ENCODE measurements at regions of chr2 and their contacts with region 1.

Region 1: DNA sequence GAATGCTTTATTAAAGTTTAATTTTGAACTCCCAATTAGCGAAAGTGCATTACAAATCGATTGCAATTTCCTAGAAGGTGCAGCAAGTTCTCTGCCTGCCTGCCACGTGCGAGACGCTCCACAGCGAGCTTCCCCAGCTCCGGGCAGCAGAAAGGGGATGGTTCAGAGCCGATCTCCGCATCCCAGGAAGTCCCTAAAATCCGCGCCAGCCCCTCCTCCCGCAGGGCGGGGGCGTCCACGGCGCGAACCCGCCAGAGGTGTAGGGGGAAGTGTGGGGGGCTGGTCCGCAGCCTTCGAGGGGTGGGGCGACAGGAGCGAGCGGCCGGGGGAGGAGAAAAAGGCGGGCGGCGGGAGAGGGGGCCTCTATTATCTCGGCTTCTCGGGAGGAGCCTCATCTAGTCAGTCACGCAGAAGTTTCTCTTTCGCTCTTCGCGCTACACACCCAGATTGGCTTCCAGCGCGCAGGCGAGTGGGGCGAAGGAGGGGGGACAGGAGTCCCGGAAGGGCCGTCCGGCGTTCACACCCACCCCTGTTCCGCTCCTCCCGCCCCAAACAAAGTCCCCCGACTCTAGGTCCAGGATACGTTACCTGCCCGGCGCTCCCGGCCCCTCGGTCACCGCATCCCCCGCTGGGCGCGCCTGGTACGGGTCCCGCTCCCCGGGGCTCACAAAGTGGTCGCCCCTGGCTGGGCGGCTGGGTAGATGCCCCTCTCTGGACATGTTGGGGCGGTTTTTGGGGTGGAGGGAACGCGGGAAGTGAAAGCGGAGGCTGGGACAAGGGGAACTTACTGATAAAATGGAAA is 9.1 kb upstream of the NR4A2 start:
- DNase-seq: peak; percentile 95
- ATAC-seq: peak; percentile 93
- H3K4me3 ChIP-seq: peak overlapping the region; percentile 86
- H3K27ac ChIP-seq: peak overlapping the region; percentile 100
- H3K4me1 ChIP-seq: peaks cover 25% of the 10 kb centered on the region
- H3K27me3 ChIP-seq: no peaks in the 10 kb centered on the region
- CTCF ChIP-seq: no peak

Region 2: DNA sequence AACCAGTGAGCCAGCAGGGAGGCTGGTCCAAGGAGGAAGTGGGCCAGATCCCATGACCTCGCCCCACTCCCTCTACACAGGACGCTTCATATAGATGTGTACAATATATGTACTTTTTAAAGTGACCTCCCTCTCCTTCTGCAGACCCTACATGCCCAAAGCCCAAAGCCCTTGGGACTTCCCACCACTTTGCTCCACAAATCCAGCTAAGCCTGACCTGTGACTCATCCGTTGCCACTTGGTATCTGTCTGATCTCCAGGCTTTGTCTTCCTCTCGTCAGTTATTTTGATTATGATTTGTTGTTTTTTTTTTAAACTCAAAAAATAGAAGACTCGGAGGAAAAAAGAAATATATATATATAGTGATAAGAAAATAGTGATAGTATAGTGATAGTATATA is 1172.3 kb before region 1 on chr2:
- intact Hi-C with region 1: no loop called
- DNase-seq: no peak
- ATAC-seq: no peak
- H3K4me3 ChIP-seq: no peak overlapping the region
- H3K27ac ChIP-seq: no peak overlapping the region
- H3K4me1 ChIP-seq: no peaks in the 10 kb centered on the region
- H3K27me3 ChIP-seq: no peaks in the 10 kb centered on the region
- CTCF ChIP-seq: no peak

Region 3: DNA sequence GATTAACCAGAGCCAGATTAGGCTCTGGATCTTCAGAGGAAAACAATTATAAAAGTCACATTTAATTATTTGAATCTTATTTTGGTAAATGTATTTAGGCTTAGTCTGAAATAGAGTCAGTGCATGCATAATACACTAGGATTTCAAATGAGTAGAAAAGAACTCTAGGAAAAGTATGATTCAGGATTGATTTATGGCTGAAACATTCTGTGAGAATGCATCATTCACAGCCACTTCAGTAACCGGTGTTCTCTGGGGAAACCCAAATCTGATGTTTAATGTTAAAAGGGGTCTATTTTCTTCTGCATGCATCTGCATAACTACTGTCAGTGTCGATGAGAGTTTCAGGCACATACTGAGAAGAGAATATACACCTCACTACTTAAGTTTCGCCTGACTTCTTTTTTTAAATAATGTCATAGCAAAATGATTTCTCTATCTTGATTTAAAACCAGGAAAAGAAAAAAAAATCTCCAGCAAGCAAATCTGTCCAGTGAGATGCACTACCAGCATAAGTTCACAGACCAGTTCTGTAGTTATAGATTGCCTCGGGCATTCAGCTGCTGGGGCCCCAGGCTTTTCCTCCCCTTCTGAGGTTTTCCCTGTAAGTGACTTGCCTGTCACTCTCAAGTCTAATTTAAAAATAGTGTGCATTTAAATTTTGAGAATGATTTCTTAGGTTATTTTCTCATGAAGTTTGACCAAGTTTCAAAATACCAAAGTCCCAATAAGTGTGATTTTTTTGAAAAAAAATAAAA is 510.7 kb before region 1 on chr2:
- intact Hi-C with region 1: no loop called
- DNase-seq: no peak
- ATAC-seq: no peak
- H3K4me3 ChIP-seq: no peak overlapping the region
- H3K27ac ChIP-seq: no peak overlapping the region
- H3K4me1 ChIP-seq: no peaks in the 10 kb centered on the region
- H3K27me3 ChIP-seq: no peaks in the 10 kb centered on the region
- CTCF ChIP-seq: no peak

Region 4: DNA sequence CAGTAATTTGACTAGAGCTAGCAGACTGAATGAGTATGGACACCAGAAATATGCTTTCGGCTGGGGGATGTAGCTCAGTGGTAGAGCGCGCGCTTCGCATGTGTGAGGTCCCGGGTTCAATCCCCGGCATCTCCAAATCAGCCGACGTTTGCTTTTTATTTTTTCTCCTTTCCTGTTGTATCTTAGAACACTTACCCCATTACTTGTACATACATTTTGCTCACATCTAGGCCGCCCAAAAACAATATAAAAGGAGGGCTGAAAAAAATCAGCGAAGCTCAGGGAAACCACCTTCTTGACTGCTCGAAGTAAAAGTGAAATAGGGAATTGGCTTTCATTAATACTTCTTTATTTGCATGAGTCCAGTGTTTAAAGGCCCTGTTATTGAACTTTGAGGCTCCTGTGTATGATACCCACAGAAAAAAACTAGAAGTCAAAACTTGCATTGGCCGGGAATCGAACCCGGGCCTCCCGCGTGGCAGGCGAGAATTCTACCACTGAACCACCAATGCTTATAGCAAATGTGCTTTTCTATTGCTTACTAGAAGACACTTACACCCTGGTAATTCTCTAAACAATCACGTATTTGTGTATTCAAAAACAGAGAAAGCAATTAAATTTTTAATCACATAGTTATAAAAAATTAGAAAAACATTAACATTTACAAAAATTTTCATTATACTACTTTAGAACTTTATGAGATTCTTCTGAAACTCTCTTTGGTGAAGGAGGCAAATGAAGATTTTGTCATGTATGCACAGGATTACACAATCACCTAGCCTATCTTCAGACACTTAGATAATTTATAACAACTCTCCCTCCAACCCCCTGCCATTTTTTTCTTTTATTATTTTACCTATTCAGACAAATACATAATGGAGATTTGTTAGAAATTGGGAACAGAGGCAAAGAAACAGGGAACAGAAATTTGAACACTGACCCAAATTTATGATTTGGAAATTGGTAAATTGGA is 59.3 kb after region 1 on chr2:
- intact Hi-C with region 1: loop called (anchors 10 kb)
- DNase-seq: peak; percentile 78
- ATAC-seq: peak; percentile 73
- H3K4me3 ChIP-seq: peak overlapping the region; percentile 71
- H3K27ac ChIP-seq: peak overlapping the region; percentile 90
- H3K4me1 ChIP-seq: peaks cover 4% of the 10 kb centered on the region
- H3K27me3 ChIP-seq: no peaks in the 10 kb centered on the region
- CTCF ChIP-seq: no peak